CD4-positive, alpha-beta memory T cell (primary cell): ENCODE measurements at regions of chr17 and their contacts with region 1.

Region 1: GRCh38 chr17:17972126-17972951 is at the starts of genes DRC3 and TOM1L2:
- DNase-seq: peak; percentile 100
- H3K4me3 ChIP-seq: peak within 1 kb of the TSS; percentile 44 to 68
- H3K4me3 Mint-ChIP-seq: peak within 1 kb of the TSS; percentile 92 to 98 (median 96)
- H3K27ac ChIP-seq: peak within 1 kb of the TSS; percentile 82
- H3K27ac Mint-ChIP-seq: peak within 1 kb of the TSS; percentile 87 to 98 (median 97)
- H3K4me1 ChIP-seq: peaks cover 25% of the 10 kb centered on the region
- H3K4me1 Mint-ChIP-seq: peaks cover 23 to 51% (median 36%) of the 10 kb centered on the region in 4 donors
- H3K27me3 ChIP-seq: no peaks in the 10 kb centered on the region
- H3K27me3 Mint-ChIP-seq: no peaks in the 10 kb centered on the region
- total RNA-seq, gene DRC3: 0.64 to 0.67 TPM
- total RNA-seq, gene TOM1L2: 59.4 to 63.1 TPM

Region 2: GRCh38 chr17:17591355-17592298 is 380.7 kb before region 1 on chr17 and contains the start of gene PEMT:
- CTCF ChIA-PET with region 1: no interaction called
- POLR2A ChIA-PET with region 1: no interaction called
- intact Hi-C with region 1: loop called (anchors 1 kb)
- DNase-seq: peak; percentile 94 to 97 (median 94)
- H3K4me3 ChIP-seq: peak within 1 kb of the TSS; percentile 86 to 99
- H3K4me3 Mint-ChIP-seq: peak within 1 kb of the TSS; percentile 93 to 97 (median 95)
- H3K27ac ChIP-seq: peak within 1 kb of the TSS; percentile 73
- H3K27ac Mint-ChIP-seq: peak within 1 kb of the TSS; percentile 84 to 99 (median 96)
- H3K4me1 ChIP-seq: peaks cover 21% of the 10 kb centered on the region
- H3K4me1 Mint-ChIP-seq: peaks cover 11 to 29% (median 18%) of the 10 kb centered on the region in 4 donors
- H3K27me3 ChIP-seq: no peaks in the 10 kb centered on the region
- H3K27me3 Mint-ChIP-seq: no peaks in the 10 kb centered on the region
- total RNA-seq, gene PEMT: 11.6 to 13.8 TPM

Region 3: GRCh38 chr17:17836250-17836817 is 136.0 kb before region 1 on chr17:
- CTCF ChIA-PET with region 1: no interaction called
- POLR2A ChIA-PET with region 1: interaction called, 7 read pairs
- intact Hi-C with region 1: loop called (anchors 1 kb)
- DNase-seq: peak; percentile 95 to 98 (median 97)
- H3K4me3 ChIP-seq: peak overlapping the region; percentile 48 to 64
- H3K4me3 Mint-ChIP-seq: peak overlapping the region; percentile 73 to 93 (median 89)
- H3K27ac ChIP-seq: peak overlapping the region; percentile 98
- H3K27ac Mint-ChIP-seq: peak overlapping the region; percentile 95 to 99 (median 98)
- H3K4me1 ChIP-seq: peaks cover 57% of the 10 kb centered on the region
- H3K4me1 Mint-ChIP-seq: peaks cover 35 to 78% (median 62%) of the 10 kb centered on the region in 4 donors
- H3K27me3 ChIP-seq: no peaks in the 10 kb centered on the region
- H3K27me3 Mint-ChIP-seq: no peaks in the 10 kb centered on the region

Region 4: DNA sequence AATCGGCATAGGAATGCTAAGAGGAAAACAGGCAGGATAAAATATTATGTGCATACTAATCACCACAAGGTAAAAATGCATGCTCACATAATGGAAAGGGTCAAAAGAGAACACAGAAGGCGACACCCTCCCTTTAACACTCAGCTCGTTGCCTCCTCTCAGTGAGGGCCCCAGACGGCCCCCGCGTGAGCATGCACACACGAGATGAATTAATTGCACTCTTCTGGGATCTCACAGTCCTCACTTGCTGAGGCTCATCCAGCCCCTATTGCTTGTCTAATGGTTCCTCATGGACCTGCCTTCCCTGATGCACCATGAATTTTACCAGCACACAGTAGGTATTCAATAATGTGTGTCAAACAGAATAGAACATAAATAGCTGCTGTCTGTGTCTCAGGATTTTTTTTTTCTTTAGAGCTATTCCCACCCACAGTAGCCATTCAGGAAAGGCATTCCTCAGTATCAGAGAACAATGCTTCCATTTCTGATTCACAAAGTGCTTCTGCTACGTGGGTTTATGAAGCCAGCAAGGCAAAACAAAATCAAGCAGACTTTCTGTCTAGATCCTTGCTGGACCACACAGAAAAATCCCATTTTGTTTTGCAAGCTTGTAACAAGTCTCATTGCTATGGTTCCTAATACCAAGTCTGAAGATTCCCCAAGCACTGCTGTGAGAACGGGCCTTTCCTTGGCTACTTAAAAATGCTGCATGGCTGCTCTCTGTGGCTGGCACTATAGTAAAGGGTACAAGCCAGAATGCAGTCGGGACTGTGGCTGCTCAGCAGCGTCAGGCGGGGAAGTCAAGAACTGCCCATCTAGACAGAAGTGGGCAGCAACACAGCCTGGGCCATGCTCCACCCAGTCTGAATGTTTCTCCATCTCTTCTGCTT is 43.7 kb before region 1 on chr17:
- CTCF ChIA-PET with region 1: no interaction called
- POLR2A ChIA-PET with region 1: no interaction called
- intact Hi-C with region 1: no loop called
- DNase-seq: no peak
- H3K4me3 ChIP-seq: no peak overlapping the region
- H3K4me3 Mint-ChIP-seq: no peak overlapping the region
- H3K27ac ChIP-seq: no peak overlapping the region
- H3K27ac Mint-ChIP-seq: peak overlapping the region in 2 of 7 donors; percentile 32 to 38
- H3K4me1 ChIP-seq: no peaks in the 10 kb centered on the region
- H3K4me1 Mint-ChIP-seq: peaks cover 7 to 16% (median 8%) of the 10 kb centered on the region in 4 donors
- H3K27me3 ChIP-seq: no peaks in the 10 kb centered on the region
- H3K27me3 Mint-ChIP-seq: no peaks in the 10 kb centered on the region

Region 5: GRCh38 chr17:17959520-17960361 is 12.6 kb before region 1 on chr17:
- CTCF ChIA-PET with region 1: interaction called, 9 read pairs
- POLR2A ChIA-PET with region 1: interaction called, 122 read pairs
- intact Hi-C with region 1: loop called (anchors 1 kb)
- DNase-seq: peak in 4 of 5 donors; percentile 26 to 38 (median 28)
- H3K4me3 ChIP-seq: peak overlapping the region; percentile 32 to 75
- H3K4me3 Mint-ChIP-seq: peak overlapping the region; percentile 79 to 97 (median 86)
- H3K27ac ChIP-seq: peak overlapping the region; percentile 65
- H3K27ac Mint-ChIP-seq: peak overlapping the region; percentile 91 to 100 (median 96)
- H3K4me1 ChIP-seq: peaks cover 46% of the 10 kb centered on the region
- H3K4me1 Mint-ChIP-seq: peaks cover 49 to 74% (median 61%) of the 10 kb centered on the region in 4 donors
- H3K27me3 ChIP-seq: no peaks in the 10 kb centered on the region
- H3K27me3 Mint-ChIP-seq: no peaks in the 10 kb centered on the region

Region 6: GRCh38 chr17:18033442-18034099 is 61.2 kb after region 1 on chr17:
- CTCF ChIA-PET with region 1: interaction called, 5 read pairs
- POLR2A ChIA-PET with region 1: interaction called, 5 read pairs
- intact Hi-C with region 1: loop called (anchors 1 kb)
- DNase-seq: peak; percentile 72 to 77 (median 74)
- H3K4me3 ChIP-seq: no peak overlapping the region
- H3K4me3 Mint-ChIP-seq: peak overlapping the region in 2 of 8 donors; percentile 12 to 26
- H3K27ac ChIP-seq: no peak overlapping the region
- H3K27ac Mint-ChIP-seq: peak overlapping the region in 6 of 7 donors; percentile 43 to 89 (median 76)
- H3K4me1 ChIP-seq: peaks cover 24% of the 10 kb centered on the region
- H3K4me1 Mint-ChIP-seq: peaks cover 17 to 38% (median 25%) of the 10 kb centered on the region in 4 donors
- H3K27me3 ChIP-seq: no peaks in the 10 kb centered on the region
- H3K27me3 Mint-ChIP-seq: no peaks in the 10 kb centered on the region

Region 7: GRCh38 chr17:18038861-18039534 is 66.7 kb after region 1 on chr17 and contains the starts of genes ATPAF2 and GID4:
- CTCF ChIA-PET with region 1: no interaction called
- POLR2A ChIA-PET with region 1: interaction called, 5 read pairs
- intact Hi-C with region 1: loop called (anchors 1 kb)
- DNase-seq: peak; percentile 99 to 100 (median 100)
- H3K4me3 ChIP-seq: peak within 1 kb of the TSS; percentile 72 to 79
- H3K4me3 Mint-ChIP-seq: peak within 1 kb of the TSS; percentile 92 to 100 (median 100)
- H3K27ac ChIP-seq: peak within 1 kb of the TSS; percentile 73
- H3K27ac Mint-ChIP-seq: peak within 1 kb of the TSS; percentile 80 to 100 (median 99)
- H3K4me1 ChIP-seq: peaks cover 26% of the 10 kb centered on the region
- H3K4me1 Mint-ChIP-seq: peaks cover 34 to 60% (median 48%) of the 10 kb centered on the region in 4 donors
- H3K27me3 ChIP-seq: no peaks in the 10 kb centered on the region
- H3K27me3 Mint-ChIP-seq: no peaks in the 10 kb centered on the region
- total RNA-seq, gene ATPAF2: 24.1 to 24.3 TPM
- total RNA-seq, gene GID4: 11.1 to 13.1 TPM

Region 8: GRCh38 chr17:18087610-18088491 is 115.5 kb after region 1 on chr17 and contains the start of gene DRG2:
- CTCF ChIA-PET with region 1: no interaction called
- POLR2A ChIA-PET with region 1: interaction called, 4 read pairs
- intact Hi-C with region 1: loop called (anchors 1 kb)
- DNase-seq: peak; percentile 84 to 90 (median 86)
- H3K4me3 ChIP-seq: peak within 1 kb of the TSS; percentile 71 to 99
- H3K4me3 Mint-ChIP-seq: peak within 1 kb of the TSS; percentile 98 to 100 (median 99)
- H3K27ac ChIP-seq: peak within 1 kb of the TSS; percentile 87
- H3K27ac Mint-ChIP-seq: peak within 1 kb of the TSS; percentile 98 to 99 (median 98)
- H3K4me1 ChIP-seq: peaks cover 23% of the 10 kb centered on the region
- H3K4me1 Mint-ChIP-seq: peaks cover 20 to 43% (median 25%) of the 10 kb centered on the region in 4 donors
- H3K27me3 ChIP-seq: no peaks in the 10 kb centered on the region
- H3K27me3 Mint-ChIP-seq: no peaks in the 10 kb centered on the region
- total RNA-seq, gene DRG2: 56.8 to 61.0 TPM